ENCODE measurements at regions of chr6 and their contacts with region 1.

Region 1: GRCh38 chr6:31271641-31272357 is at the start of gene HLA-C:
- DNase-seq: peak; percentile 86 to 97 (median 91)
- H3K4me3 ChIP-seq: peak within 1 kb of the TSS; percentile 78
- H3K4me3 Mint-ChIP-seq: peak within 1 kb of the TSS; percentile 94 to 100 (median 98)
- H3K27ac ChIP-seq: peak within 1 kb of the TSS; percentile 89
- H3K27ac Mint-ChIP-seq: peak within 1 kb of the TSS; percentile 99 to 100 (median 100)
- H3K4me1 ChIP-seq: peaks cover 49% of the 10 kb centered on the region
- H3K4me1 Mint-ChIP-seq: peaks cover 58 to 70% (median 62%) of the 10 kb centered on the region in 3 donors
- H3K27me3 ChIP-seq: no peaks in the 10 kb centered on the region
- H3K27me3 Mint-ChIP-seq: peaks cover 0 to 20% of the 10 kb centered on the region in 2 donors
- total RNA-seq, gene HLA-C: 823 to 860 TPM

Region 2: DNA sequence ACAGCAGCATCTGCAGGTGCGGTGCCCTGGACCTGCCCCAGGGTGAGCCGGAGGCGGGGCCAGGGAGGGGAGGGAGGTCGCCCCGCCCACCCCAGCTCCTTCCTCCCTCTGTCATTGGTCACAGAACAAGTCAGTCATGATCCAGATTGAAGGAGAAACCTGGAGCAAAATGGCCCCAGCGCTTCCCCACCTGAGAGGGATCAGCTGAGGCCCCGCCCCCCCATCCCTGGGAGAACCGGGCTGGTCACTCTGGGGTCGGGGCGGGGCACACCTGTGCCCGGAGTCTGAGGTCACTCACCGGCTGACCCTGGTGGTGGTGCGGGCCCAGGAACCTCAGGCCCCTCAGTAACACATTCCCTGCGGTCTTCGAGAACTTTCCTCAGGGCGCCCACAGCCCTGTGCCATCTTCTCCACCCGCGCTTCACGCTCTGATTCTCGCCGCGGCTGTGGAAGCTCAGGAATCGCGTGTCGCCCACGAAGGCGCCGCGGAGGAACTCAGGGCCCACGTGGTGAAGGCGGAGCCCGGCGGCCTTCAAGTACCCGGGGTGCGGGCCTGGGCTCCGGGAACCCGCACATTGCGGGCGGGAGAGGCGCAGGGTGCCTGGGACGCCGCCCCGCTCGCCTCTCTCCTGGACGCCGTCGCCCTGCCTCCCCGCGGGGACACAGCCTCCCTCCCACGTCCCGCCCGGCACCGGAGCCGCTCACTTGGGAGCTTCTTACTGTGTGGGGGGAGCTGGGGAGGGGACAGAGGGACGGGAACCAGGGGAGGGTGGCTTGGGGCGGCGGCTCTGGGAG is 36.4 kb after region 1 on chr6:
- CTCF ChIA-PET with region 1: no interaction called
- POLR2A ChIA-PET with region 1: interaction called, 16 read pairs
- DNase-seq: peak; percentile 47 to 84 (median 76)
- H3K4me3 ChIP-seq: peak overlapping the region; percentile 57
- H3K4me3 Mint-ChIP-seq: peak overlapping the region; percentile 83 to 92 (median 86)
- H3K27ac ChIP-seq: no peak overlapping the region
- H3K27ac Mint-ChIP-seq: peak overlapping the region in 5 of 8 donors; percentile 74 to 94 (median 84)
- H3K4me1 ChIP-seq: peaks cover 3% of the 10 kb centered on the region
- H3K4me1 Mint-ChIP-seq: peaks cover 0 to 10% (median 6%) of the 10 kb centered on the region in 3 donors
- H3K27me3 ChIP-seq: peaks cover 3% of the 10 kb centered on the region
- H3K27me3 Mint-ChIP-seq: peaks cover 11 to 13% of the 10 kb centered on the region in 2 donors

Region 3: DNA sequence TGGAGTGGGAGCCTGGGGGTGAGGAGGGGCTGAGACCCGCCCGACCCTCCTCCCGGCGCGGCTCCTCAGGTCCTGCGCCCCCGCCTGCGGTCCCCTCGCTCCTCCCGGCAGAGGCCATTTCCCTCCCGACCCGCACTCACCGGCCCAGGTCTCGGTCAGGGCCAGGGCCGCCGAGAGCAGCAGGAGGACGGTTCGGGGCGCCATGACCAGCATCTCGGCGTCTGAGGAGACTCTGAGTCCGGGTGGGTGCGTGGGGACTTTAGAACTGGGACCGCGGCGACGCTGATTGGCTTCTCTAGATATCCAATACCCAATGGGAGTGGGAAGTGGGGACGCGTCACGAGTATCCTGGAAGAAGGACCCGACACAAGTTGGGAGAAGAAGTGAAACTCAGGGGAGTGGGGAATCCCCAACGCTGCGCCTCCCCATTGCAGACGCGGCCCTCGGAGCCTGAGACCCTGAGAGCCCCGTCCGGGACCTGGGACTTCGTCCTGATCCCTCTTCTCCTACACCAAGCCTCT is 85.2 kb after region 1 on chr6 and contains the start of gene HLA-B:
- CTCF ChIA-PET with region 1: no interaction called
- POLR2A ChIA-PET with region 1: interaction called, 42 read pairs
- DNase-seq: peak; percentile 77 to 94 (median 84)
- H3K4me3 ChIP-seq: peak within 1 kb of the TSS; percentile 100
- H3K4me3 Mint-ChIP-seq: peak within 1 kb of the TSS; percentile 96 to 100 (median 97)
- H3K27ac ChIP-seq: peak within 1 kb of the TSS; percentile 99
- H3K27ac Mint-ChIP-seq: peak within 1 kb of the TSS; percentile 100
- H3K4me1 ChIP-seq: peaks cover 43% of the 10 kb centered on the region
- H3K4me1 Mint-ChIP-seq: peaks cover 58 to 64% (median 62%) of the 10 kb centered on the region in 3 donors
- H3K27me3 ChIP-seq: no peaks in the 10 kb centered on the region
- H3K27me3 Mint-ChIP-seq: peaks cover 8 to 36% of the 10 kb centered on the region in 2 donors
- total RNA-seq, gene HLA-B: 3,705 to 3,812 TPM

Region 4: GRCh38 chr6:31441365-31442267 is 169.8 kb after region 1 on chr6:
- CTCF ChIA-PET with region 1: no interaction called
- POLR2A ChIA-PET with region 1: no interaction called
- DNase-seq: peak; percentile 71 to 90 (median 79)
- H3K4me3 ChIP-seq: no peak overlapping the region
- H3K4me3 Mint-ChIP-seq: peak overlapping the region in 1 of 7 donors; percentile 32
- H3K27ac ChIP-seq: no peak overlapping the region
- H3K27ac Mint-ChIP-seq: peak overlapping the region in 1 of 8 donors; percentile 19
- H3K4me1 ChIP-seq: no peaks in the 10 kb centered on the region
- H3K4me1 Mint-ChIP-seq: peaks cover 3 to 7% (median 5%) of the 10 kb centered on the region in 3 donors
- H3K27me3 ChIP-seq: no peaks in the 10 kb centered on the region
- H3K27me3 Mint-ChIP-seq: peaks cover 20 to 54% of the 10 kb centered on the region in 2 donors

Region 5: GRCh38 chr6:32906539-32906938 is 1634.7 kb after region 1 on chr6:
- CTCF ChIA-PET with region 1: no interaction called
- POLR2A ChIA-PET with region 1: no interaction called
- DNase-seq: no peak
- H3K4me3 ChIP-seq: no peak overlapping the region
- H3K4me3 Mint-ChIP-seq: no peak overlapping the region
- H3K27ac ChIP-seq: no peak overlapping the region
- H3K27ac Mint-ChIP-seq: no peak overlapping the region
- H3K4me1 ChIP-seq: no peaks in the 10 kb centered on the region
- H3K4me1 Mint-ChIP-seq: no peaks in the 10 kb centered on the region
- H3K27me3 ChIP-seq: no peaks in the 10 kb centered on the region
- H3K27me3 Mint-ChIP-seq: peaks cover 2 to 5% of the 10 kb centered on the region in 2 donors